CD8-positive, alpha-beta T cell (primary cell): ENCODE measurements at regions of chr21 and their contacts with region 1.

Region 1: GRCh38 chr21:46323227-46324128 is at the start of gene C21orf58:
- DNase-seq: peak; percentile 94 to 99 (median 98)
- ATAC-seq: peak; percentile 83
- H3K4me3 ChIP-seq: peak within 1 kb of the TSS; percentile 99
- H3K4me3 Mint-ChIP-seq: peak within 1 kb of the TSS; percentile 96
- H3K27ac ChIP-seq: peak within 1 kb of the TSS; percentile 97 to 100
- H3K27ac Mint-ChIP-seq: peak within 1 kb of the TSS; percentile 98
- H3K4me1 ChIP-seq: peaks cover 12% of the 10 kb centered on the region
- H3K4me1 Mint-ChIP-seq: peaks cover 38% of the 10 kb centered on the region
- H3K27me3 ChIP-seq: no peaks in the 10 kb centered on the region
- H3K27me3 Mint-ChIP-seq: no peaks in the 10 kb centered on the region
- CTCF ChIP-seq: no peak
- total RNA-seq, gene C21orf58: 1.2 to 1.5 TPM

Region 2: DNA sequence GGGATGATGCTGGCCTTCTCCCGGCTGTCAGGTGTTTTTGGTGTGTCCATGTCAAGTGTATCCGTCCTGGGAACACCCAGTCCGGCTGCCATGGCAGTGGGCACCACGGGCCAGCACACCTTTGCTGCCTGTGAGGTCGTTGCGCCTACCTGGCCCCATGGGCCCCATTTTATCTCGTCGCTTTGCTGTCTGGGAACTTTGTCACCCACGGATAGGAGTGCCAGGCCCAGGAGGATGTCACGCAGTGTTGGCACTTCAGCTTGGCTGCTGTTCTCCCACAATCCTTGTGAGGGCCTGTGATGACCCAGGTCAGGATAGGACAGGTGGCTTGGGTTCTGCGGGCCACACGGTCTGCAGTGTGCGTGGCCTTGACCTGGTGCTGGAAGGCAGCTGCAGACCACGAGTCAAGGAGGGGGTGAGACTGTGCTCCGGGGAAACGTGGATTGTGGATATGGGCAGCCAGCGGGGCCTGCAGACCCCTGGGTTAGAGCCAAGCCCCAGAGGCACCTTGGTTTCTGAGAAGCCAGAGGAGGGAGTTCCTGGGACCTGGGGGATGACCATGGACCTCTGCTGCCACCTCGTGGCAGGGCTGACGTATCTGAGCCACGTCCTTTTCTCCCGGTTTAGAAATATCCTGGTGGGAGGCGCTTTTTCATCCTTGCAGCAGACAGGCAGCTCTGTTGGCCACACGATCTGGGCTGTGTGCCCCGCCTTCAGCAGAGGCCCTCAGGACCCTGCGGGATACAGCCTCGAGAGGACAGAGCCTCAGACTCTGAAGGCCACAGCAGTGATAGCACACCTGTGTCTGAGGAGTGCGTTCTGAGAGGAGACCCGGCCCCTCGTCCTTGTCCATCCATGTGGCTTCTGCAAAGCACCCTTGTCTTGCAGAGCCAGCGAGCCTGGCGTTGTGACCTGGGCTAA is 503.0 kb before region 1 on chr21:
- CTCF ChIA-PET with region 1: no interaction called
- POLR2A ChIA-PET with region 1: no interaction called
- intact Hi-C with region 1: no loop called
- DNase-seq: peak; percentile 54 to 86 (median 82)
- ATAC-seq: peak; percentile 72
- H3K4me3 ChIP-seq: no peak overlapping the region
- H3K4me3 Mint-ChIP-seq: no peak overlapping the region
- H3K27ac ChIP-seq: no peak overlapping the region
- H3K27ac Mint-ChIP-seq: peak overlapping the region; percentile 21
- H3K4me1 ChIP-seq: peaks cover 3% of the 10 kb centered on the region
- H3K4me1 Mint-ChIP-seq: peaks cover 18% of the 10 kb centered on the region
- H3K27me3 ChIP-seq: no peaks in the 10 kb centered on the region
- H3K27me3 Mint-ChIP-seq: peaks cover 5% of the 10 kb centered on the region
- CTCF ChIP-seq: peak; percentile 80

Region 3: GRCh38 chr21:45973659-45974072 is 349.8 kb before region 1 on chr21:
- CTCF ChIA-PET with region 1: no interaction called
- POLR2A ChIA-PET with region 1: no interaction called
- intact Hi-C with region 1: loop called in 1 of 2 experiments (anchors 2 kb)
- DNase-seq: peak; percentile 64 to 91 (median 85)
- ATAC-seq: peak; percentile 92
- H3K4me3 ChIP-seq: peak overlapping the region; percentile 64 to 87
- H3K4me3 Mint-ChIP-seq: peak overlapping the region; percentile 86
- H3K27ac ChIP-seq: peak overlapping the region in 1 of 2 experiments; percentile 40
- H3K27ac Mint-ChIP-seq: peak overlapping the region; percentile 74
- H3K4me1 ChIP-seq: peaks cover 27% of the 10 kb centered on the region
- H3K4me1 Mint-ChIP-seq: peaks cover 13% of the 10 kb centered on the region
- H3K27me3 ChIP-seq: peaks cover 0 to 36% of the 10 kb centered on the region in 2 experiments
- H3K27me3 Mint-ChIP-seq: peaks cover 19% of the 10 kb centered on the region
- CTCF ChIP-seq: peak; percentile 83

Region 4: GRCh38 chr21:46184625-46185555 is 138.6 kb before region 1 on chr21:
- CTCF ChIA-PET with region 1: no interaction called
- POLR2A ChIA-PET with region 1: no interaction called
- intact Hi-C with region 1: loop called in 1 of 2 experiments (anchors 1 kb)
- DNase-seq: peak; percentile 39 to 94 (median 77)
- ATAC-seq: peak; percentile 86
- H3K4me3 ChIP-seq: peak overlapping the region; percentile 64 to 79
- H3K4me3 Mint-ChIP-seq: peak overlapping the region; percentile 86
- H3K27ac ChIP-seq: peak overlapping the region; percentile 67 to 83
- H3K27ac Mint-ChIP-seq: peak overlapping the region; percentile 91
- H3K4me1 ChIP-seq: peaks cover 9% of the 10 kb centered on the region
- H3K4me1 Mint-ChIP-seq: peaks cover 15% of the 10 kb centered on the region
- H3K27me3 ChIP-seq: no peaks in the 10 kb centered on the region
- H3K27me3 Mint-ChIP-seq: no peaks in the 10 kb centered on the region
- CTCF ChIP-seq: no peak

Region 5: DNA sequence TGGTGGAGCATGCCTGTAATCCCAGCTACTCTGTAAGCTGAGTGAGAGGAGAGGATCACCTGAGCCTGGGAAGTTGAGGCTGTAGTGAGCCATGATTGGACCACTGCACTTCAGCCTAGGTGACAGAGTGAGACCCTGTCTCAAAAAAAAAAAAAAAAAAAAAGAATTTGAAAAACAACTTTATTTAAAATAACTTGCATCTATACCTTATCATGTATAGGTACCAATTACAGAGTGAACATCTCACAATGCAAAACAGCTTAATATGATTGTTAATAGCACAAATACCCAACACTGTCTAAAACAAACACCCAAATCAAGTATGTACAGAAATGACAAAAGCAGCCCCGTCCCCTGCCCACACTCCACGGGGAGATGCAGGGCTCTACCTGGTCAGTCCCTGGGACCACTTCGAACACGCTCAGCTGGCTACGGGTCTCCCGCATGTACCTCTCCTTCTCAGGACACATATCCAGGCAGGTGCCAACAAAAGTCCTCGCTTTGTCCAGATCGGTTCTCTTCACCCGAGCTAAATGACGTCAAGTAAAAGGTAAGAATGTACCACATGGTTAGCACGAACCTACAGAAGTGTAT is 48.6 kb before region 1 on chr21:
- CTCF ChIA-PET with region 1: no interaction called
- POLR2A ChIA-PET with region 1: no interaction called
- intact Hi-C with region 1: no loop called
- DNase-seq: no peak
- ATAC-seq: no peak
- H3K4me3 ChIP-seq: no peak overlapping the region
- H3K4me3 Mint-ChIP-seq: no peak overlapping the region
- H3K27ac ChIP-seq: no peak overlapping the region
- H3K27ac Mint-ChIP-seq: no peak overlapping the region
- H3K4me1 ChIP-seq: no peaks in the 10 kb centered on the region
- H3K4me1 Mint-ChIP-seq: peaks cover 9% of the 10 kb centered on the region
- H3K27me3 ChIP-seq: no peaks in the 10 kb centered on the region
- H3K27me3 Mint-ChIP-seq: no peaks in the 10 kb centered on the region
- CTCF ChIP-seq: no peak

Region 6: DNA sequence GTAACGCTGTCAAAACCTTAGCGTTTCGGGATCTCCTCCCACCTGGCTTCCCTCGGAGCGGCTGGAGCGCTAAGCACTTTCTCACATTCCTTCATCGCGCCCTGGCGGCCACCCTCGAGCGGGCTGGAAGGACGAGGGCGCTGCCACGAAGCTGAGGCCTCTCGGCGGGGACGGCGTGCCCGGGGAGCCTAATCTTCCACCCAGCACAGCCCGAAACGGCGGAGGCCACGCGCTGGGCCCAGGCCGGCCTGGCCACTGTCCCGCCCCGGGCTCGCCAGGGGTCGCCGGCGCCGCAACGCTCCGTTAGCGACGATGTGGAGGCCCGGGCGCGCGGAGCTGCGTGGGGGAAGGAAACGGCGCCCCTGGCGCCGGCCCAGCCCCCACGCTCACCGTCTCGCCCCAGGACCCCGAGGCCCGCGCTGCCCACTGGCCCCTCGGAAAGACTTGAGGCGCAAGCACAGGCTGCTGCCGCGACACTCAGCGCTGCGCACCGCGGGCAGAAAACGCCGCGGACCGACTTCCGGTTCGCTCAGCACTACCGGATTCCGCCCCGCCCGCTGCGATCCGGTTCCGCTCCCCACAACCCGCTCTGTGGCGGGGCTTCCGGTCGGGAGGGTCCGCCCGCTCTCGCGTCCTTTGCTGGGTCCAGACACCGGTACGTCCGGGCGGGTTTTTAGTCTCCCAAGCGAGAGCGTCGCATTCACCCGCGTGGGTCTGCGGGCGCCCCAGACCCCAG is 37.5 kb before region 1 on chr21 and contains the start of gene YBEY:
- CTCF ChIA-PET with region 1: interaction called, 4 read pairs
- POLR2A ChIA-PET with region 1: interaction called, 4 read pairs
- intact Hi-C with region 1: loop called (anchors 1 kb)
- DNase-seq: peak; percentile 59 to 93 (median 84)
- ATAC-seq: peak; percentile 79
- H3K4me3 ChIP-seq: peak within 1 kb of the TSS; percentile 85 to 88
- H3K4me3 Mint-ChIP-seq: peak within 1 kb of the TSS; percentile 90
- H3K27ac ChIP-seq: peak within 1 kb of the TSS; percentile 72 to 86
- H3K27ac Mint-ChIP-seq: peak within 1 kb of the TSS; percentile 94
- H3K4me1 ChIP-seq: peaks cover 38% of the 10 kb centered on the region
- H3K4me1 Mint-ChIP-seq: peaks cover 61% of the 10 kb centered on the region
- H3K27me3 ChIP-seq: no peaks in the 10 kb centered on the region
- H3K27me3 Mint-ChIP-seq: no peaks in the 10 kb centered on the region
- CTCF ChIP-seq: peak; percentile 43
- total RNA-seq, gene YBEY: 10.8 to 13.6 TPM

Region 7: DNA sequence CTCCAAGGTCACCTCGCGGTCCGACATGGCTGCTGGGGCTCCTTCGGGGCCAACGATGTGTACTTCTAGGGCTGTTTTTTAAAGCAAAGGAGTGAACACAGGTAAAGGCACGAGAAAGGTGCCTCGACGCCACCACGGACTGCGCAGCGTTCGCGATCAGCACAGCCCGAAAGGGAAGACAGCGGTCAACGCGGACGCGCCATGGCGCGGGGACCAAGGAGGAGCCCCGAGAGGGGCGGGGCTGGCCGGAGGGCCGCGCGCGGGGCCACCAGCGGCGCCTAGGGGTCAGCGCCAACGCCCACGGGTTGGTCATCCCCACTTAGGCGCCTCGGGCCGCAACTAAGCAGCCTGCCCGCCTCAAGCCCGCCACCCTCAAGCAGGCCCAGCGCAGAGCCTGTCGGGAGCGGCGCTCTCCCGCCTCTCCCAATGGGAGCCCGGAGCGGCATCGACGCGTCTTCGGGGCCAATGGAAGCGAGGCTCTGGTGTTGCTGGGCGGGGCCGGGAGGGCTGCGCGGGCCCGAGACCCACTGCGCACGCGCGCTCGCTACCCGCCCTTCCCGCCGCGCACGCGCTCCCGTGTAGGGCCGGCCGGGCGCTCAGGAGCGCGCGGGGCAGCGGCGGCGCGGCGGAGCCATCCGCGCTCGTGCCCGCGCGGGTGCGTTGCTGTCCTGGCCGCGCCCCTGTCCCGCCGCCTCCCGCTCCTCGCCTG is 135.0 kb after region 1 on chr21 and contains the start of gene DIP2A:
- CTCF ChIA-PET with region 1: interaction called, 4 read pairs
- POLR2A ChIA-PET with region 1: no interaction called
- intact Hi-C with region 1: loop called in 1 of 2 experiments (anchors 1 kb)
- DNase-seq: peak; percentile 87 to 99 (median 94)
- ATAC-seq: peak; percentile 96
- H3K4me3 ChIP-seq: peak within 1 kb of the TSS; percentile 81 to 99
- H3K4me3 Mint-ChIP-seq: peak within 1 kb of the TSS; percentile 90
- H3K27ac ChIP-seq: peak within 1 kb of the TSS; percentile 85 to 94
- H3K27ac Mint-ChIP-seq: peak within 1 kb of the TSS; percentile 96
- H3K4me1 ChIP-seq: peaks cover 44% of the 10 kb centered on the region
- H3K4me1 Mint-ChIP-seq: peaks cover 61% of the 10 kb centered on the region
- H3K27me3 ChIP-seq: no peaks in the 10 kb centered on the region
- H3K27me3 Mint-ChIP-seq: no peaks in the 10 kb centered on the region
- CTCF ChIP-seq: no peak
- total RNA-seq, gene DIP2A: 59.5 to 62.3 TPM